ENCODE measurements at regions of chr13 and their contacts with region 1.

Region 1: GRCh38 chr13:100514788-100515409 is 73.7 kb downstream of the GGACT start:
- DNase-seq: peak; percentile 55
- ATAC-seq: peak; percentile 95
- H3K4me3 ChIP-seq: no peak overlapping the region
- H3K27ac ChIP-seq: no peak overlapping the region
- H3K4me1 ChIP-seq: peaks cover 32 to 33% of the 10 kb centered on the region in 2 experiments
- H3K27me3 ChIP-seq: no peaks in the 10 kb centered on the region
- CTCF ChIP-seq: peak; percentile 90 to 98 (median 92)
- POLR2A ChIP-seq: no peak
- RAD21 ChIP-seq: peak; percentile 98

Region 2: DNA sequence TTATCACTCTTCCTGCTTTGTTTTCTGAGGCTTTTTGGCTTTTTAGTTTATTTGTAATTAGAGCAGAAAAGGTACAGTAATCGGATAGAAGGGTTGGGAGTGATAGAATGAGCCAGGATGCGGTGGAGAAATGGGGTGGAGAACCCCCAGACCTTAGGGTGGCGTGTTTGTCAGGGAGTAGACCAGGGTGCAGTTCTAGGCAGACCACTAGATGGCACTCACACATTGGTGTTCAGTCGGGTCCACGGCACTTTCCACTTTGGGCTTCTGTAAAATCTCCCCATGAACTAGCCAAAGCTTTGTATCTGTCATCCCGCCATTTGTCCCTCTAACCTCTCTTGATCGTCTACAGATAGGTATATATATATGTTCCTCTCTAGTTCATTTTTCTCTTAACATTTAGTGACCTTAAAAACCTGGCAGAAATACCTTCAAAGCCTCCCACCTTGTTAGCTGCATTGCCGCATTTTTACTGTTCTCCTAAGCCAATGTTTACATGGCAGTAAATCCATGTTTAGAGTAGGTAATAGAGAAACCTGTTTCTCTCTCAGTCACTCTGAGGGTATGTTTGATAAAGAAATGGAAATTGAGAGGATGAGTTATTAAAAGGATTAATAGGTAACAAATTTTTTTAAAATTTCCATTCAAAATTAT is 858.7 kb before region 1 on chr13:
- CTCF ChIA-PET with region 1: interaction called, 4 read pairs
- POLR2A ChIA-PET with region 1: no interaction called
- RAD21 ChIA-PET with region 1: interaction called in 1 of 2 experiments, 3 read pairs
- intact Hi-C with region 1: loop called (anchors 1 kb)
- DNase-seq: peak; percentile 55
- ATAC-seq: peak; percentile 82
- H3K4me3 ChIP-seq: peak overlapping the region; percentile 1 to 43
- H3K27ac ChIP-seq: peak overlapping the region; percentile 63
- H3K4me1 ChIP-seq: peaks cover 11 to 23% of the 10 kb centered on the region in 2 experiments
- H3K27me3 ChIP-seq: no peaks in the 10 kb centered on the region
- CTCF ChIP-seq: peak; percentile 86 to 93 (median 90)
- POLR2A ChIP-seq: no peak
- RAD21 ChIP-seq: peak; percentile 87

Region 3: DNA sequence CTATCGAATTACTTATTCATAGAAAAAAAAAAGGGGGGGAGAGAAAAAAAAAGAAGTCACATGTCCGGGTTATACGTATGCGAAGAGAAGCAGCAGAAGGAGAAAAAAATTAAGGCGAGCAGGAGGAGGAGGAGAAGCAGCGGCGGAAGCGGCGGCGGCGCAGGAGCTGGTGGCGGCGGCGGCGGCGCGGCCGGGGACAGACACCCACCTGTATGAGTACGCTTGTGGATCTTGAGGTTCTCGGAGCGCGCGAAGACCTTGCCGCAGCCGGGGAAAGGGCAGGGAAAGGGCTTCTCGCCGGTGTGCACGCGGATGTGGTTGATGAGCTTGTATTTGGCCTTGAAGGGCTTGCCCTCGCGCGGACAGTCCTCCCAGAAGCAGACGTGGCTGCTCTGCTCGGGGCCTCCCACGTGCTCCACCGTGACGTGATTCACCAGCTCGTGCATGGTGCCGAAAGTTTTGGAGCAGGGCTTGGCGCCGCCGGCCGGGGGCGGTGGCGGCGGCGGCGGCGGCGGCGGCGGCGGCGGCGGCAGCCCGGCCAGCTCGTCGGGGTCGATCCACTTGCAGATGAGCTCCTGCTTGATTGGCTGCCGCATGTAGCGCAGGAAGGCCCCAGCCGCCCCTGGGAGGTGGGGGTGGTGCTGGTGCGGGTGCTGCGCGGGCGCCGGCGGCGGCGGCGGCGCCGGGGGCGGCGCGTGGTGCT is 544.8 kb before region 1 on chr13:
- CTCF ChIA-PET with region 1: interaction called, 3 read pairs
- POLR2A ChIA-PET with region 1: no interaction called
- RAD21 ChIA-PET with region 1: no interaction called
- intact Hi-C with region 1: loop called (anchors 5 kb)
- DNase-seq: peak; percentile 66
- ATAC-seq: peak; percentile 78
- H3K4me3 ChIP-seq: peak overlapping the region; percentile 79 to 82
- H3K27ac ChIP-seq: peak overlapping the region; percentile 97
- H3K4me1 ChIP-seq: peaks cover 10 to 33% of the 10 kb centered on the region in 2 experiments
- H3K27me3 ChIP-seq: no peaks in the 10 kb centered on the region
- CTCF ChIP-seq: no peak
- POLR2A ChIP-seq: peak; percentile 12
- RAD21 ChIP-seq: no peak

Region 4: DNA sequence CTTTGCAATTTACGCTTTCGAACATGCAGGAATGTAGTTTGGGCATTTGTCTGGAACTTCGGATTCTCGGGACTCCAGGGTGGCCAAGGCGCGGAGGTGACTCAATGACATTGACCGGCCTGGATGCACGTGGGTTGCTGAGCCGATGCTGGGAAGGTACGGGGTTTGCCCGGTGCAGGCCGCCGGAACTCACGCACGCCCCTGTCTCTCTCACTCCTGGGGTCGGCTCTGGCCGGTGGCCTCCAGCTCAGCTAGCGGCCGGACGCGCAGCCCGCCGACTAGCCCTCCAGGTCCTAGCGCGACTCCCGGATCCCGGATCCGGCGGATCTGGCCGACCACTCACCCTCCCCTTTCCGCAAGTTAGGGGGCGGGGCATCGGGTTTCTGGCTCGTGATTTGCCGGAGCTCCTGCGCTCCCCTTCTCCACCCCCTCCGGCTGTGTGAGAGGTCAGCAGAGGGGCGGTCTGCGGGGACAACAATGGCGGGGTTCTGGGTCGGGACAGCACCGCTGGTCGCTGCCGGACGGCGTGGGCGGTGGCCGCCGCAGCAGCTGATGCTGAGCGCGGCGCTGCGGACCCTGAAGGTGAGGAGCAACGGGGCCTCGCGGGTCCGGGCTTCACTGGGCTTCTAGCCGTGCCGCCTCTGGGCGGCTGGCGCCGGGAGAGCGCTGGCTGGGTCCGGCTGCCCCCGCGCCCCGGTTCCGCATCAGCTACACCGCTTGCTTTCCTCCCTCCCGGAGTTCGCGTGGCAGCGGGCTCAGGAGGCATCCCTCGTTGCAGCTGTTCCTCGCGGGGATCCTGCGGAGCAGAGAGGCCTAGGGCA is 426.0 kb before region 1 on chr13 and contains the start of gene PCCA:
- CTCF ChIA-PET with region 1: interaction called, 4 read pairs
- POLR2A ChIA-PET with region 1: no interaction called
- RAD21 ChIA-PET with region 1: no interaction called
- intact Hi-C with region 1: loop called (anchors 2 kb)
- DNase-seq: peak; percentile 81
- ATAC-seq: peak; percentile 94
- H3K4me3 ChIP-seq: peak within 1 kb of the TSS; percentile 73 to 82
- H3K27ac ChIP-seq: peak within 1 kb of the TSS; percentile 57
- H3K4me1 ChIP-seq: peaks cover 20 to 22% of the 10 kb centered on the region in 2 experiments
- H3K27me3 ChIP-seq: no peaks in the 10 kb centered on the region
- CTCF ChIP-seq: no peak
- POLR2A ChIP-seq: peak; percentile 52
- RAD21 ChIP-seq: no peak
- total RNA-seq, gene PCCA: 23.0 TPM

Region 5: GRCh38 chr13:100347941-100348340 is 167.0 kb before region 1 on chr13:
- CTCF ChIA-PET with region 1: no interaction called
- POLR2A ChIA-PET with region 1: no interaction called
- RAD21 ChIA-PET with region 1: no interaction called
- intact Hi-C with region 1: loop called (anchors 10 kb)
- DNase-seq: peak; percentile 67
- ATAC-seq: peak; percentile 91
- H3K4me3 ChIP-seq: no peak overlapping the region
- H3K27ac ChIP-seq: peak overlapping the region; percentile 44; the same call in 1 of the 2 replicates
- H3K4me1 ChIP-seq: peaks cover 15 to 30% of the 10 kb centered on the region in 2 experiments
- H3K27me3 ChIP-seq: no peaks in the 10 kb centered on the region
- CTCF ChIP-seq: no peak
- POLR2A ChIP-seq: no peak
- RAD21 ChIP-seq: no peak

Region 6: DNA sequence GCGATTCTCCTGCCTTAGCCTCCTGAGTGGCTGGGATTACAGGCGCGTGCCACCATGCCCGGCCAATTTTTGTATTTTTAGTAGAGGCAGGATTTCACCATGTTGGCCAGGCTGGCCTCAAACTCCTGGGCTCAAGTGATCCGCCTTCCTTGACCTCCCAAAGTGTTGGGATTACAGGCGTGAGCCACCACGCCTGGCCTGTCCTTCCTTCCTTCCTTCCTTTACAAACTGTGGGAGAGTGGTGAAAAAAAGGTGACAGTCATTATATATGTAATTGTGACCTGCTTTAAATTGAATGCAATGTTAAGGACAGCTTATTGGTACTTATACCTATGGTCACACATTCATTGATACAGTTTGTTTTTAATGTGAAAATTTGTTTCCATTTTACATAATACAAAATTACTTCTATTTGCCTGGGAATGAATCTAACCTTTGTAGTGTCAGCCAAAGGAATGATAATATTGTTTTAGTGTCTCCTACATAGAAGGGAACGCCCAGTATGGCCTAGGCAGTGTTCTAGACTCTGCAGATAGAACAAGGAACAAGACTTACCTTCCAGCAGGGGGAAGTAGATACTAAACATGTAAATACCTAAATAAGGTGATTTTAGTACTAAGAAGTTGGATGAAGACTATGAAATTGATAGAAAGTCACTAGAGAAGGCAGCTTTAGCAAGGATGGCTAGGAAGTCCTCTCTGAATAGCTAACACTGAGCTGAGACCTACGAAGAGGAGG is 72.6 kb before region 1 on chr13:
- CTCF ChIA-PET with region 1: interaction called, 4 read pairs
- POLR2A ChIA-PET with region 1: no interaction called
- RAD21 ChIA-PET with region 1: interaction called in 1 of 2 experiments, 4 read pairs
- intact Hi-C with region 1: loop called (anchors 2 kb)
- DNase-seq: no peak
- ATAC-seq: peak; percentile 74
- H3K4me3 ChIP-seq: no peak overlapping the region
- H3K27ac ChIP-seq: no peak overlapping the region
- H3K4me1 ChIP-seq: peaks cover 42 to 59% of the 10 kb centered on the region in 2 experiments
- H3K27me3 ChIP-seq: no peaks in the 10 kb centered on the region
- CTCF ChIP-seq: peak; percentile 20 to 34 (median 25); a peak in 3 of 6 replicates
- POLR2A ChIP-seq: no peak
- RAD21 ChIP-seq: peak; percentile 55

Measured in HCT116 (cell line).